GM12878 (cell line): ENCODE measurements at regions of chr1 and their contacts with region 1.

Region 1: DNA sequence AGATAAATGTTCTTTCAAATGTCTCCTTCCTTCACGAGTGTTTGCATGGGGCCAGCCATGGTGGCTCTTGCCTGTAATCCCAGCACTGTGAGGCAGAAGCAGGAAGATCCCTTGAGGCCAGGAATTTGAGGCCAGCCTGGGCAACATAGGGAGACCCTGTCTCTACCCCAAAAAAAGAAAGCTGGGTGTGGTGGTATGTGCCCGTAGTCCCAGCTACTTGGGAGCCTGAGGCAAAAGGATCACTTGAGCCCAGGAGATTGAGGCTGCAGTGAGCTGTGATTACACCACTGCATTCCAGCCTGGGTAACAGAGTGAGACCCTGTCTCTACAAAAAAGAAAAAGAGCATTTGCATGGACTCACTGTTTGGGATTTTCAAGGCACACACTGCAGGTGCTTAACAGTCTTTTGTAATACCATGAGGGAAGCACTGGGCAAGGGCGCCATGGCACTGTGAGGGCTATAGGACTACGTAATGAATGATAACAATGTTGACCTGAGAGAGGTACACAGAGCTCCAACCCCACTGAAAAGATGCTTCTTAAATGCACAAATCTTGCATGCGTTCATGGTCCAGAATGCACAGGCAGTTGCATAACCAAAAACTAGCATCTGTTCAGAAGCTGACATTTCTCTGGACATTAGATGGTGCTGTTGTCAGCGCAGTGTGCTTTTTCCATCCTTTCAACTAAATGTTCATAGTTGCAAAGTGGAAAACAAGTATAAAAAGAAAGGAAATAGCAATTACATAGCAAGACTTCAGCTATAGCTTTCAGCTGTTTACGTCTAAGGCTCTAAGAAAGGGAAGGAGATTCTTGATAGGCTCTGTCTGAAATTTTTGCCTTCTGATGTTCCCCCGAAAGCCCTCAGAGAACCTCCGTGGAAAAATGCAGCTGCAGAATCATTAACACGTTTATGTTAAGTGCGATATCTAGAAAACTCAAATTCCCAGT is 7.8 kb upstream of the TARBP1 start:
- DNase-seq: no peak
- ATAC-seq: peak; percentile 63
- H3K4me3 ChIP-seq: no peak overlapping the region
- H3K27ac ChIP-seq: no peak overlapping the region
- H3K4me1 ChIP-seq: peaks cover 34% of the 10 kb centered on the region
- H3K27me3 ChIP-seq: no peaks in the 10 kb centered on the region
- CTCF ChIP-seq: peak; percentile 59 to 73 (median 72); a peak in 5 of 6 replicates
- EP300 ChIP-seq: no peak
- POLR2A ChIP-seq: no peak
- RAD21 ChIP-seq: peak; percentile 92

Region 2: DNA sequence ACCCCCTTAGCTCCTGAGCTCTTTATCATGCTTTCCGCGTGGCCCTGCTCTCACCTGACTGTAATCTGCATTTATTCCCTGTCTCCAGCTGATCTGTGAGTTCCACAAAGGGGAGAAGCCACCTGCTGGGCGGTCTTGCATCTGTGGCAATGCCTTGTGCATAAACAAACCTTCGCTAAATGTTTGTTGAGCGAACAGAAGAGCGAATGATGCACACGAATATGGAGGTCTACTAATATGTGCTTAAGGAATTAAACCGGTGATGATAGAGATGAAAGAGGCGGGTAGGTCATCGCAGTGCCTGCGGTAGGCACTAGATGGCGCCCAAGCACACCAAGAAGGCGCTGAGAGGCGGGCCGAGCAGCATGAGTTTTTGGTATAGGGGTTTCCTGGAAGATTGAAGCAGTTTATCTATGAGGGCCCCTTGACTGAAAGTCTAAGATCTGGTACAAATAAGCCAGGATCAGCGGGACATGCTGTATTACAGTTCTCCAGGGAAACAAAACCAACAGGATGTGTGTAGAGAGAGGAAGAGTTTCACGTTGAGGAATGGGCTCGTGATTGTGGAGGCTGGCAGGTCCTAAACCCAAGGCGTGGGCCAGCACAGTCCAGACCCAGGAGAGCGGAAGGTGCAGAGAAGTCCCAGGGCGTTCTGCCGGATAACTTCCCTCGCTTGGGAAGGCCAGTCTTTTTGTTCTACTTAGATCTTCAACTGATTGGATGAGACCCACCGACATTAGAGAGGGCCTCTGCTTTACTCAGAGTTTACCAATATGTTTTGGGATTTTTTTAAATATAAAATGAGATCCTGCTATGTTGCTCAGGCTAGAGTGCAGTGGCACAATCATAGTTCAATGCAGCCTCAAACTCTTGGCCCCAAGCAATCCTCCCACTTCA is 607.2 kb after region 1 on chr1:
- CTCF ChIA-PET with region 1: interaction called, 7 read pairs
- POLR2A ChIA-PET with region 1: no interaction called
- RAD21 ChIA-PET with region 1: no interaction called
- SMC1A ChIA-PET with region 1: interaction called, 10 read pairs
- in situ Hi-C with region 1: no loop called
- intact Hi-C with region 1: no loop called
- DNase-seq: no peak
- ATAC-seq: peak; percentile 94
- H3K4me3 ChIP-seq: no peak overlapping the region
- H3K27ac ChIP-seq: no peak overlapping the region
- H3K4me1 ChIP-seq: no peaks in the 10 kb centered on the region; the same call in 1 of the 2 replicates
- H3K27me3 ChIP-seq: no peaks in the 10 kb centered on the region
- CTCF ChIP-seq: peak; percentile 91 to 97 (median 94)
- EP300 ChIP-seq: no peak
- POLR2A ChIP-seq: no peak
- RAD21 ChIP-seq: peak; percentile 81

Region 3: DNA sequence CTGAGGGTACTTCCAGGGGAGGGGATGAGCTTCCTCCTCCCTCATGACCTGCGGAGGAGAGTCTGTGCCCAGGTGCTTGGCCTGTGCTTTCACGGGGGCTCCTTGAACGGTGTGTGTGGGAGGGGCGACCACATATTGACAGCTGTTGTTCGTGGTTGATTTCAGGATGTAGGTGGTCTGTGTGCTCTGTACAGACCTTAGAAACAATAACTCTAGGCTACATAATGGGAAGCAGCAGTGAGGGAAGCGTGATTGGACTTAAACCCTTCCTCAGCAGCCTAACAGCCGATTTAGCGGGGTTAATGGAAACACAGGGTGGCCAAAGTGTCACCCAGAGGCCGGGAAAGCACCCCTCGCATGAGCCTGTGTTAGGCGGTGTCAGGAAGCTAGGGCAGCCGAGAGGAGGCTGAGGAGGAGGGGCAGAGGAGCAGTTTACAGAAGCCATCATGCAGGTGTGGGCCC is 936.4 kb after region 1 on chr1:
- CTCF ChIA-PET with region 1: no interaction called
- POLR2A ChIA-PET with region 1: no interaction called
- RAD21 ChIA-PET with region 1: no interaction called
- SMC1A ChIA-PET with region 1: no interaction called
- in situ Hi-C with region 1: loop called (anchors 5 kb)
- intact Hi-C with region 1: loop called (anchors 5 kb)
- DNase-seq: peak; percentile 4
- ATAC-seq: peak; percentile 95
- H3K4me3 ChIP-seq: no peak overlapping the region
- H3K27ac ChIP-seq: no peak overlapping the region
- H3K4me1 ChIP-seq: peaks cover 10% of the 10 kb centered on the region
- H3K27me3 ChIP-seq: no peaks in the 10 kb centered on the region
- CTCF ChIP-seq: no peak
- EP300 ChIP-seq: no peak
- POLR2A ChIP-seq: no peak
- RAD21 ChIP-seq: no peak